GM12878 (cell line): ENCODE measurements at regions of chr3 and their contacts with region 1.

Region 1: DNA sequence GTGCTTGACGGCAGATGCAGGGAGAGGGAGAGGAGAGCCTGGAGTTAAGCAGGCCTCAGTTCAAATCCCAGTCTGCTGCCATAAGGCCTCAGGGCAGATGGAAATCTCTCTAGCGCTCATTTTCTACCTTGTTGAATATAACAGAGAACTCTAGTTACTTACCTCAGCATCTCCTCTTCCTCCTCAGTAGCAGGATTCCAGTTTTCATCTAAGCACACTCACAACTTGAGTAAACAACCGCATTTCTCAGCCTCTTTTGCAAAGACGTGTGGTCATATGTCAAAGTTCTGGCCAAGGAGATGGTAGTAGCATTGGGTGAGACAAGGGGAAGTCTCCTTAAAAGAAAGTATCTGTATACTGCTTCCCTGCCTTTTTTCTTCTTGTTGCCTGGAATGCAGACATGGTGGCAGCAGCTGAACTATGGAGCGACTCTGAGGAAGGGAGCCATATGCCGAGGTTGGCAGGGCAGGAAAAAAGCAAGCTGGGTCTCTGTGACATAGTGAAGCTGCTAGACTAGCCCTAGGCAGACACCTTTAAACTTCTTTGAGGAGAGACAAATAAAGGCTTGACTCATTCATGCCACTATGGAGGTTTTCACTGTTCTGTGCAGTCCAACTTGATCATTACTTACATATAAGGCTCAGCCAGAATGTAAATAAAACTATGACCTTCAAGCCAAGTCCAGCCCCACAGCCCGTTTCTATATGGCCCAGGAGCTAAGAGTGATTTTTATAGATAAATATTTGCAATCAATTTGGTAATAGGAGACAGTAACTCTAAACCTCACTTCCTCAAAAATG is 30.4 kb upstream of the PRICKLE2 start:
- DNase-seq: no peak
- ATAC-seq: no peak
- H3K4me3 ChIP-seq: no peak overlapping the region
- H3K27ac ChIP-seq: no peak overlapping the region
- H3K4me1 ChIP-seq: no peaks in the 10 kb centered on the region
- H3K27me3 ChIP-seq: no peaks in the 10 kb centered on the region
- CTCF ChIP-seq: no peak
- EP300 ChIP-seq: no peak
- POLR2A ChIP-seq: no peak
- RAD21 ChIP-seq: no peak

Region 2: DNA sequence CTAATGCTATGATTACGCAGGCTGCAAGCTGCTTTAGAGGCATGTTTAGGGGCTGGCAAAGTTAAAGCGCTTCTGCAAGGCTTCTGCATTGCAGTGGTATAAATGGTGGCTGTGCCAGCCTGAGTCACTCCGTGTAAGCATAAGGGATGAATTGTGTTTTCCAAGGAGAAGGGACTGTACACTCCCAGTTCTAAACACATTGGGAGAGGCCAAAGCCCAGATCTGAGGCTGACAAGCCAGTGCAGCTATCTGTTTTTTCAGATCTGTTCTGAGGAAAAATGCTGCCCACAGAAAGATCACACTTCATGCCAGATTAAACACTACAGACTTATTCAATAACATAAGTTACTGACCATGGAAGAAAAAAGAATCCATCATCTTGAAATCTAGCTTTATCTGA is 114.2 kb before region 1 on chr3:
- CTCF ChIA-PET with region 1: no interaction called
- POLR2A ChIA-PET with region 1: no interaction called
- RAD21 ChIA-PET with region 1: no interaction called
- SMC1A ChIA-PET with region 1: no interaction called
- in situ Hi-C with region 1: no loop called
- intact Hi-C with region 1: no loop called
- DNase-seq: no peak
- ATAC-seq: no peak
- H3K4me3 ChIP-seq: no peak overlapping the region
- H3K27ac ChIP-seq: no peak overlapping the region
- H3K4me1 ChIP-seq: no peaks in the 10 kb centered on the region
- H3K27me3 ChIP-seq: no peaks in the 10 kb centered on the region
- CTCF ChIP-seq: no peak
- EP300 ChIP-seq: no peak
- POLR2A ChIP-seq: no peak
- RAD21 ChIP-seq: no peak

Region 3: DNA sequence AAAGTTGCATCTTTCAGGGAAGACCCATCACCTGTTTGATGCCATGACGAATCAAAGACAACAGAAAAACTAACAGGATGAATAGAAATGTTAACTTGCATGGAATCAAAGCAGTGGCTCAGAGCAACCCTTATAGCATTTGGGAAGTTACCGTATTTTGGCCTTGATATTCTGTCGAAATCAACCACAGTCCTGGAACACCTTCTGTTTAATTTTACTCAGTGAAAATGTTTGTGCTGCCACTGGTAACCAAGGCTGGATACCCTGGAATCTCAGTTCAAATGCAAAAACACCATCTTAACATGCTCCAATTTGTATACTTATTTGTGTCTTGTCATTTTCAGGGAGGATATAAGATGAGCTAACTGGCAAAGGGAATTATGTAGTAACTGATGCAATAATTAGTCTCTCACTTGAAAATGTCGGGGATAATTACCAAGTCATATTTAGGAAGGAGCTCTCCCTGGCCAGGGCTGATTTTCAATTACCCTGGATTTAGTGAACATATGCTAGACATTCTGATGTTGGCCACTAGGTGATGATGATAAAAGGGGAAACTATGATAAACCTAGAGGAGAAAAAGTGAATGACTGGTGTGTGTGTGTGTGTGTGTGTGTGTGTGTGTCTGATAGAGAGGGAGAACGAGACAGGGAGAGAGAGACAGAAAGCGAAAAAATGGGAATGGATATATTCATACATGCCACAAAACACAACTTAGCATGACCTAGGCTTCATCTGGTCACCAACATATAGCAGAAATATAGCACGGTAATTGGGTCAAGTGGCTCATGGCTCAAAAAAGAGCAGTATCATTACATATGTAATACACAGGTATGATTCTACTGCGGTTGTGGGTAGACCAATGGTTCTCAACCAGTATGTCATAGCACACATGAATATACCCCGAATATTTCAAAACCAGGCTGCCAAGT is 11.4 kb before region 1 on chr3:
- CTCF ChIA-PET with region 1: interaction called, 3 read pairs
- POLR2A ChIA-PET with region 1: no interaction called
- RAD21 ChIA-PET with region 1: interaction called, 3 read pairs
- SMC1A ChIA-PET with region 1: interaction called, 11 read pairs
- in situ Hi-C with region 1: no loop called
- intact Hi-C with region 1: no loop called
- DNase-seq: no peak
- ATAC-seq: peak; percentile 77
- H3K4me3 ChIP-seq: no peak overlapping the region
- H3K27ac ChIP-seq: no peak overlapping the region
- H3K4me1 ChIP-seq: no peaks in the 10 kb centered on the region
- H3K27me3 ChIP-seq: no peaks in the 10 kb centered on the region
- CTCF ChIP-seq: peak; percentile 24 to 51 (median 35); a peak in 3 of 6 replicates
- EP300 ChIP-seq: no peak
- POLR2A ChIP-seq: no peak
- RAD21 ChIP-seq: peak; percentile 44; the same call in 1 of the 2 replicates

Region 4: DNA sequence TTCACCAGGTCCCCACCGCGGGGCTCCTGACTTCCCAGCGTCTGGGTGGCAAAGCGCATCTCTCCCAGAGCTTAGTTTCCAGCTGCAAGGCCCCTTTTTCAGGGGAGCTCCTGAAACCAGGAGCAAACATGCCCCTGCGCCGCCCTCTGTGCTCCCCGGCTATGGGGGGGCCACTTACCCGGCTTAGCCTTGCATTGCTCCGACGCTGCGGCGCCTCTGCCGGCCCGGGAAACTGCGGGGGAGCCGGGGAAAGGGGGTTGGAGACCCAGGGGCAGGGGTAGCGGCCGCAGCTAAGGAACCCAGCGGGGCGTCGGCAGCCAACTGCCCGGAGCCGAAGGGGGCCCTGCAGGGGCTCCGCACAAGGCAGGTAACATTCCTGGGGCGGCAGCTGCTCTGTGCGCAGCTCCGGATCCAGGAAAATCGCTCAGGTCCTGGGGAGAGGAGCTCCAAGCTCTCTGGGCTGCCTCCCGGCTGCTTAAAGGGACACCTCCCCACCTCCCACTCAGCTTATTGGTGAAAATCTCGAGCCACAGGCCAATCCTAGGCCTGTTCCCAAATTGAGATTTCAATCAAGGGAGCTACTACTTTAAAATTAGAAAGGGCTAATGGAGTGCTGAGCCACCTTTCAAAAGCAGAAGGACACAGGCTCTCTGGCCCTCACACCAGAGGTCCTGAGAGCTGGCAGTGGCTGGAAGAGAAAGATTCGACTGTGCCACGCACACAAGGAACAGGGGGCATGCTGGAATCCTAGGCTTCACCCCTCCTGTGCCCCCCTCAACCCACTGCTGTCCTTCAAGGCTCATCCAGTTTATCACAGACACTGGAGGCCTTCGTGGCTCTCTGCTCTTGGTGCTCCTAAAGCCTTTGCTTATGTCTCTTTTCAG is 12.2 kb after region 1 on chr3:
- CTCF ChIA-PET with region 1: interaction called, 30 read pairs
- POLR2A ChIA-PET with region 1: no interaction called
- RAD21 ChIA-PET with region 1: interaction called, 5 read pairs
- SMC1A ChIA-PET with region 1: interaction called, 45 read pairs
- in situ Hi-C with region 1: no loop called
- intact Hi-C with region 1: no loop called
- DNase-seq: no peak
- ATAC-seq: no peak
- H3K4me3 ChIP-seq: no peak overlapping the region
- H3K27ac ChIP-seq: no peak overlapping the region
- H3K4me1 ChIP-seq: no peaks in the 10 kb centered on the region
- H3K27me3 ChIP-seq: peaks cover 0 to 5% of the 10 kb centered on the region in 2 experiments; a peak in 3 of 4 replicates
- CTCF ChIP-seq: no peak
- EP300 ChIP-seq: no peak
- POLR2A ChIP-seq: no peak
- RAD21 ChIP-seq: no peak

Region 5: GRCh38 chr3:64295594-64295993 is 39.9 kb after region 1 on chr3:
- CTCF ChIA-PET with region 1: no interaction called
- POLR2A ChIA-PET with region 1: no interaction called
- RAD21 ChIA-PET with region 1: no interaction called
- SMC1A ChIA-PET with region 1: no interaction called
- in situ Hi-C with region 1: no loop called
- intact Hi-C with region 1: no loop called
- DNase-seq: no peak
- ATAC-seq: no peak
- H3K4me3 ChIP-seq: no peak overlapping the region
- H3K27ac ChIP-seq: no peak overlapping the region
- H3K4me1 ChIP-seq: no peaks in the 10 kb centered on the region
- H3K27me3 ChIP-seq: no peaks in the 10 kb centered on the region
- CTCF ChIP-seq: no peak
- EP300 ChIP-seq: no peak
- POLR2A ChIP-seq: no peak
- RAD21 ChIP-seq: no peak